CD8-positive, alpha-beta T cell (primary cell): ENCODE measurements at regions of chr18 and their contacts with region 1.

Region 1: GRCh38 chr18:50287441-50288347 is at the start of gene CXXC1:
- DNase-seq: peak; percentile 96 to 100 (median 97)
- ATAC-seq: peak; percentile 88
- H3K4me3 ChIP-seq: peak within 1 kb of the TSS; percentile 91 to 98
- H3K4me3 Mint-ChIP-seq: peak within 1 kb of the TSS; percentile 99
- H3K27ac ChIP-seq: peak within 1 kb of the TSS; percentile 91 to 99
- H3K27ac Mint-ChIP-seq: peak within 1 kb of the TSS; percentile 99
- H3K4me1 ChIP-seq: peaks cover 14% of the 10 kb centered on the region
- H3K4me1 Mint-ChIP-seq: peaks cover 34% of the 10 kb centered on the region
- H3K27me3 ChIP-seq: no peaks in the 10 kb centered on the region
- H3K27me3 Mint-ChIP-seq: no peaks in the 10 kb centered on the region
- CTCF ChIP-seq: peak; percentile 22
- total RNA-seq, gene CXXC1: 107 to 119 TPM

Region 2: DNA sequence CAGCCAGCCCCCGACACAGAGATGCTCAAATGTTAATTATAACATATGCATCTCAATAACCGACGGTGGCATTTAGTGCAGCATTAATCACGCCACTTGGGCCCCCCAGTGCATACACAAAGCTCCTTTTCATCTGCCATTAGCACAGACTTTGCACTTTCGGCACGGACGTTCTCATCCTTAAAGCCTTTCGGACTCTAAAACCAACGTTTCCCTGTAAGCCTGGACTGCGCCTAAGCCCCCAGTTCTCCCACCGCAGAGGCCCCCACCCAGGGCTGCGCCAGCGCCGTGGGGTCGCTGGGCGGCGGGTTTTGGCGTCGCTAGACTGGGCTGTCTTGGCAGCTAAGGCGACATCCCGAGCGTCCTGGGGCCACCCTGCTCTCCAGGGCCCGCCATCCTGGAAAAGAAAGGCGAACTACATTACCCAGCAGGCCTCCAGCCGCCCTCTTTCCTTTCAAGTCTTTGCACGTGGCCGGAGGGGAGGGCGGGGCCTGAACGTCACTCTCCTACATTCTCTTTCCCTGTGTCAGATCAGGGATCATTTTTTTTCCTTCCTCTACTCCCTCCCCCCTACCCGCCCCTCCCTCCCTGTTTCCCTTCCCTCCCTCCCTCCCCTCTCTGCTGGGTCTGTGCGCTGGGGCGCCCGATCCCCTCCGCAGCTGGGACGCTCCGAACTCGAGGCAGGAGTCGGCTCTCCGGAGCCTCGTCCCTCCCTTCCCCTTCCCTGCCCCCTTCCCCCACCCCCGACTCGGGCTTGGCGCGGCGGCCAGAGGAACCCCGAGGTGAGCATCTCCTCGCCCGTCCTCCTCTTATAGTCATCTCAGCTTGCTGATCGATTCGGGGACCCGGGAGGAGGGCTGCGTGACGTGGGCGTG is 1748.9 kb before region 1 on chr18 and contains the start of gene CTIF:
- CTCF ChIA-PET with region 1: no interaction called
- POLR2A ChIA-PET with region 1: no interaction called
- intact Hi-C with region 1: loop called in 1 of 2 experiments (anchors 5 kb)
- DNase-seq: peak in 8 of 9 experiments; percentile 30 to 72 (median 57)
- ATAC-seq: peak; percentile 66
- H3K4me3 ChIP-seq: peak within 1 kb of the TSS; percentile 63 to 77
- H3K4me3 Mint-ChIP-seq: peak within 1 kb of the TSS; percentile 86
- H3K27ac ChIP-seq: no peak within 1 kb of the TSS
- H3K27ac Mint-ChIP-seq: no peak within 1 kb of the TSS
- H3K4me1 ChIP-seq: peaks cover 6% of the 10 kb centered on the region
- H3K4me1 Mint-ChIP-seq: peaks cover 10% of the 10 kb centered on the region
- H3K27me3 ChIP-seq: peaks cover 0 to 12% of the 10 kb centered on the region in 2 experiments
- H3K27me3 Mint-ChIP-seq: peaks cover 20% of the 10 kb centered on the region
- CTCF ChIP-seq: no peak
- total RNA-seq, gene CTIF: 2.0 to 3.0 TPM

Region 3: DNA sequence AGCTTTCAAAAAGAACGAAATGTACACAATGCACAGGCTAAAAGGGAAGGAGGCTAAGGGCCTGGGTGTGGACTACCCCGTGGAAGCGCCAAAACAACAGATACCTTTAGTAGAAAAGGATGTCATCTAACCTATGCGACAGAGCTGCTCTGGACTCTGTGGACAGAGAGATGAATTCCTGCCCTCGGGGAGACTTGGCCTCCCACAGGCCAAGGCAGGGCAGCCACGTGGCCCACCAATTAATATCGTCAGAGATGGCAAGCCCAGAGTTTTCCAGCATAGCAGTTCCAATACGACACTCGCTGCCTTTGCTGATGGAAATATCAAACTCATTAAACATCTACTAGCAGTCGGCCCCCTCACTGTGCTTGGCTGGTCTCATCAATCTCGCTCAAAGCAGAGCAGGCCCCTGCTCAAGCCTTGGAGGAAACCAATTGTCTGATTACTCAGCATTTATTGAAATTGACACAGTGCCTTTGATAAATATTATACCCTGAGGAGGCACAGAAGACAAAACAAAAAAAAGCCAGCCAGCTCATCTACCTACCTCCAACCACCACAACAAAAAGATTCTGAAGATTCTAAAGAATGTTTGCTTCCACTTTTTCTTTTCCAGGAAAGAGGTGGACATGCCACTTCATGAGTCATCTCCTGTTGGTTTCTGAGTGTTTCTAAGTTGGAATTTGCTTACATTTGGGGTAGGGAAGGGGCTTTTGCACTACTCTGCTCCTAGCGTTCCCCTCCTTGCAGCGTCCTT is 395.3 kb before region 1 on chr18:
- CTCF ChIA-PET with region 1: no interaction called
- POLR2A ChIA-PET with region 1: no interaction called
- intact Hi-C with region 1: no loop called
- DNase-seq: no peak
- ATAC-seq: no peak
- H3K4me3 ChIP-seq: no peak overlapping the region
- H3K4me3 Mint-ChIP-seq: no peak overlapping the region
- H3K27ac ChIP-seq: no peak overlapping the region
- H3K27ac Mint-ChIP-seq: no peak overlapping the region
- H3K4me1 ChIP-seq: no peaks in the 10 kb centered on the region
- H3K4me1 Mint-ChIP-seq: no peaks in the 10 kb centered on the region
- H3K27me3 ChIP-seq: no peaks in the 10 kb centered on the region
- H3K27me3 Mint-ChIP-seq: peaks cover 22% of the 10 kb centered on the region
- CTCF ChIP-seq: no peak

Region 4: DNA sequence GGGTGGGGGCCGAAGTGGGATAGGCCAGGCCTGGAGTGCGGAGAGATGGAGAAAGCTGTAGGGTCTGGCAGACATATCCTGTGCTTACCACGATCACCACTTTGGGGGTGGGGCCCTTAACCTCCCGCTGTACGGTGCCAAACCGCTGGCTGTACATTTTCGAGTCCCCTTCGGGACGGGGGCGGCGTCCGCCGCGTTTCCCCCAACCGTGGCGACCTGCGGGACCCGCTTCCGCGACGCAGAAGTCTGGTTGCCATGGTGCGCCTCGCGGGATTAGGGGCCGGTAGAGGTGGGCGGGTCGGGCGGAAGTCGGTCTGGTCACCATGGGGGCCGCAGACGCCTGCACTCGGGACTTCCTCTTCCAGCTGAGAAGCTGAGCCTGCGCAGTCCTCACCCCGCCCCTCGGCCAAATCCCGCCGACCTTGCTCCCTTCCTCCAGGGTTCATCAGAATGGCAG is 21.4 kb before region 1 on chr18 and contains the start of gene CFAP53:
- CTCF ChIA-PET with region 1: interaction called, 3 read pairs
- POLR2A ChIA-PET with region 1: interaction called, 3 read pairs
- intact Hi-C with region 1: loop called in 1 of 2 experiments (anchors 1 kb)
- DNase-seq: peak; percentile 58 to 93 (median 86)
- ATAC-seq: peak; percentile 83
- H3K4me3 ChIP-seq: peak within 1 kb of the TSS; percentile 38 to 67
- H3K4me3 Mint-ChIP-seq: peak within 1 kb of the TSS; percentile 88
- H3K27ac ChIP-seq: peak within 1 kb of the TSS; percentile 43 to 85
- H3K27ac Mint-ChIP-seq: peak within 1 kb of the TSS; percentile 85
- H3K4me1 ChIP-seq: peaks cover 18% of the 10 kb centered on the region
- H3K4me1 Mint-ChIP-seq: peaks cover 24% of the 10 kb centered on the region
- H3K27me3 ChIP-seq: no peaks in the 10 kb centered on the region
- H3K27me3 Mint-ChIP-seq: no peaks in the 10 kb centered on the region
- CTCF ChIP-seq: no peak
- total RNA-seq, gene CFAP53: 0.22 to 0.36 TPM

Region 5: DNA sequence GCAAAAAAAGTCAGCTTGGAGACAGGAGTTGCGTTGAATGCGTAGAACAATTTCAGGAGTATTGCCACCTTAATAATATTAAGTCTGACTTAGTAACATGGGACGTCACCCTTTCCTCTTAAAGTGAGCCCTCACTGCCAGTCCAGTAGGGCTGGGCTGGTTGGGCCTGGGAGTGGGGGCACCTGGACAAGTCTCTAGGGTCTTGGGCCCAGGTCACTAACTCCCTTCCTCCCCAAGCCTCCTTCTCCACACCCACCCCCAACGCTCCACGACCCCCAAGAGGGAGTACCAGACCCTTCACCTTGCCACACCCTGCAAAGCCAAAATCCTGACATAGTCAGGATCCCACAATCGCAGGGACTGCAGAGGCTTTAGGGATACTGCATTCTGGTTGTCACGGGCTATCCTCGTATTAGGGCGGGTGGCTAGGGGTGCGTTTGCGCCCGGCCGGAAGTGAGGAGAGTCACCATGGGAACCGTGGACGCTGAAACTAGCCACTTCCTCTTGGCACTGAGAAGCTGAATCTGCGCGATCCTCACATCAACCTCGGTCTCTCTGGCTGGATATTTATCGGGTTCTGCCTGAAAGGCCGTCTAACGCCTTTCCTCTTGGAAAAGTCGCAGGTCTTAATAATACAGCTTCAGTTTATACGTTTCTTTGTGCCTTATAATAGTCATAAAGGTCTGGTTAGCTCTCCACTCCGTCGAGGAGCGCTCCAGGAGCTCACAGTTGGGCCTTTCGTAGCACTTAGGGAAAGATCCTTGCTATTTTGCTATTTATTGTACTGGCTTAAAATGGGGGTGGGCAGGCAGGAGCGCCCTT is 10.1 kb after region 1 on chr18:
- CTCF ChIA-PET with region 1: no interaction called
- POLR2A ChIA-PET with region 1: interaction called, 4 read pairs
- intact Hi-C with region 1: loop called in 1 of 2 experiments (anchors 1 kb)
- DNase-seq: peak; percentile 39 to 84 (median 74)
- ATAC-seq: peak; percentile 93
- H3K4me3 ChIP-seq: peak overlapping the region; percentile 38 to 53
- H3K4me3 Mint-ChIP-seq: peak overlapping the region; percentile 81
- H3K27ac ChIP-seq: no peak overlapping the region
- H3K27ac Mint-ChIP-seq: no peak overlapping the region
- H3K4me1 ChIP-seq: peaks cover 11% of the 10 kb centered on the region
- H3K4me1 Mint-ChIP-seq: peaks cover 9% of the 10 kb centered on the region
- H3K27me3 ChIP-seq: peaks cover 0 to 8% of the 10 kb centered on the region in 2 experiments
- H3K27me3 Mint-ChIP-seq: peaks cover 27% of the 10 kb centered on the region
- CTCF ChIP-seq: no peak

Region 6: GRCh38 chr18:50307738-50308470 is 20.2 kb after region 1 on chr18:
- CTCF ChIA-PET with region 1: interaction called, 3 read pairs
- POLR2A ChIA-PET with region 1: interaction called, 16 read pairs
- intact Hi-C with region 1: loop called (anchors 1 kb)
- DNase-seq: peak; percentile 75 to 96 (median 91)
- ATAC-seq: peak; percentile 99
- H3K4me3 ChIP-seq: peak overlapping the region; percentile 52 to 59
- H3K4me3 Mint-ChIP-seq: peak overlapping the region; percentile 96
- H3K27ac ChIP-seq: peak overlapping the region; percentile 24 to 41
- H3K27ac Mint-ChIP-seq: peak overlapping the region; percentile 63
- H3K4me1 ChIP-seq: peaks cover 6% of the 10 kb centered on the region
- H3K4me1 Mint-ChIP-seq: peaks cover 20% of the 10 kb centered on the region
- H3K27me3 ChIP-seq: peaks cover 0 to 4% of the 10 kb centered on the region in 2 experiments
- H3K27me3 Mint-ChIP-seq: peaks cover 12% of the 10 kb centered on the region
- CTCF ChIP-seq: no peak

Region 7: GRCh38 chr18:50967714-50968661 is 680.3 kb after region 1 on chr18 and contains the start of gene ELAC1:
- CTCF ChIA-PET with region 1: no interaction called
- POLR2A ChIA-PET with region 1: no interaction called
- intact Hi-C with region 1: loop called in 1 of 2 experiments (anchors 10 kb)
- DNase-seq: peak; percentile 37 to 85 (median 64)
- ATAC-seq: peak; percentile 85
- H3K4me3 ChIP-seq: peak within 1 kb of the TSS; percentile 67 to 71
- H3K4me3 Mint-ChIP-seq: peak within 1 kb of the TSS; percentile 94
- H3K27ac ChIP-seq: peak within 1 kb of the TSS; percentile 86 to 89
- H3K27ac Mint-ChIP-seq: peak within 1 kb of the TSS; percentile 96
- H3K4me1 ChIP-seq: peaks cover 15% of the 10 kb centered on the region
- H3K4me1 Mint-ChIP-seq: peaks cover 28% of the 10 kb centered on the region
- H3K27me3 ChIP-seq: no peaks in the 10 kb centered on the region
- H3K27me3 Mint-ChIP-seq: no peaks in the 10 kb centered on the region
- CTCF ChIP-seq: no peak
- total RNA-seq, gene ELAC1: 3.5 to 4.0 TPM